GM13977 (cell line): ENCODE measurements at regions of chr13 and their contacts with region 1.

Region 1: DNA sequence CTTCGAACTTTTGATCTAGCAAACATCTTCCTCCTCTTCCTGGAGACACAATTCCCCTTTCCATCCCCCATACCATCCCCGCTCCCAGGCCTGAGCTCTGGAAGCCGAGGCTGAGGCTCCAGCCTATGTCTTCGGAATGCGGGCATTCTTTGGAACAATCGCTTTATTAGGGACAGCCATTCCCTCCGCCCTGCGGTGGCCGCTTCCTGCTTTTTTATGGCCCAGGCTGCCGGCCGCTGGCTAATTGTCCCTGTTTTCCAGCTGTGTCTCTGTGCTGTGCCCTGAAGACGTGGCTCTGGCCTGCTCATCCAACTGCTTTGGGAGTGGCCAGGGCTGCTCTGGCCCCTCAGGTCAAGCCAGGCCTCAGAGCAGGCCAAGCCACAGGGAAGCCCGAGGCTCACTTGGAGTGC is 2.1 kb upstream of the CDX2 start:
- DNase-seq: no peak
- CTCF ChIP-seq: no peak

Region 2: DNA sequence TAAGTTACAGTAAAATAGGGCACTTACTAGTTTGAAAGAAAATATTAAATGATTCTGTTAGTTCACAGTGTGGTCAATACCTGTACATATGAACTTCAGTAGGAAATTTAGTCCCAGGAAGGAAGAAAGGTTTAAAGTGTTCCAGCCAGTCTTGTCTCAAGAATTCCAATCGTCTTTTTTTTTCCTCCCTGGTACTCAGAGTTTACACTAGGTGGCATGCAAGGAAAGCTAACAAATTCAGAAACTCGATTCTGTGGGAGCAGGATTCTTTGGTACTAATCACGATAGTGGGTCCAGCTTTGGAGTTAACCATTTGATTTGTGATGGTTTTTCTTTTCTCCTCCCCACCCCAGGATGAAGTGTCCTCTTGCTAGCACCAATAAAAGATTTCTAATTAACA is 305.9 kb before region 1 on chr13:
- in situ Hi-C with region 1: no loop called
- DNase-seq: no peak
- CTCF ChIP-seq: no peak

Region 3: DNA sequence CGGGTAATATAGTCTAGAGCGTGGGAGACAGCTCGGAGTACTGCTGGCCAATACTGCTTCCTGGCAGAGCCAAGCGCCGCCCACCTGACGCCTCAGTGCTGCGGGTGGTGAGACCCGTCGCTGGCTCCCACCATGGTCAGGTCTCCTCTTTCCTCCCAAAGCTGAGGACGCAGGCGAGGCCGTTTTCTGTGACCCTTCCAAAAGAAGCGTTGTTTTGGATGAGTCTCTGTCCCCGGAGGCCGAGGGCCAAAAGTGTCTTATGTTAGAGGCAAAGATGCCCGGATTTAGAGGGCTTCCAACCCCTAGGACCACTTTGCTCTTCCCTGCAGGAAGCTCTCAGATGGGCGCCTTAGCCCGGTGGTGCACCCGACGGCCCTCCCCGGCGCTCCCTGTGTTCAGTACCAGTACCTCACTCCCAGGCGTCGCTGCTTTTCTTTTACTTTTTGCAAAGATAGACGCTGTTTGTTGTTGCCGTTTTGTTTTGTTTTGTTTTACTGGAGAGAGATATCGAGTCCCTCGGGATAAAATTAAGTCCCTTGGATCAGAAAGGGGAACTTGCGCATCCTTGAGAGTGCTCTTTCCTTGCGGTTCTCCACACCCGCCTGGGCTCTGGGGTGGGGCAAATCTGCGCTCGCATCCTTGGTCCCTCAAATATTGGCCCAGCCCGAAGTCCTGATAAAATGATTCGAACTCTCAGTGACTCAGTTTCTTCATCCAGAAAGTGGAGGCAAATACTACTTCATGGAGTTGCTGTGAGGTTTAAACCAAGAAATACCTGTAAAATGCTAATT is 44.4 kb before region 1 on chr13:
- in situ Hi-C with region 1: loop called (anchors 5 kb)
- DNase-seq: peak; percentile 32
- CTCF ChIP-seq: no peak

Region 4: DNA sequence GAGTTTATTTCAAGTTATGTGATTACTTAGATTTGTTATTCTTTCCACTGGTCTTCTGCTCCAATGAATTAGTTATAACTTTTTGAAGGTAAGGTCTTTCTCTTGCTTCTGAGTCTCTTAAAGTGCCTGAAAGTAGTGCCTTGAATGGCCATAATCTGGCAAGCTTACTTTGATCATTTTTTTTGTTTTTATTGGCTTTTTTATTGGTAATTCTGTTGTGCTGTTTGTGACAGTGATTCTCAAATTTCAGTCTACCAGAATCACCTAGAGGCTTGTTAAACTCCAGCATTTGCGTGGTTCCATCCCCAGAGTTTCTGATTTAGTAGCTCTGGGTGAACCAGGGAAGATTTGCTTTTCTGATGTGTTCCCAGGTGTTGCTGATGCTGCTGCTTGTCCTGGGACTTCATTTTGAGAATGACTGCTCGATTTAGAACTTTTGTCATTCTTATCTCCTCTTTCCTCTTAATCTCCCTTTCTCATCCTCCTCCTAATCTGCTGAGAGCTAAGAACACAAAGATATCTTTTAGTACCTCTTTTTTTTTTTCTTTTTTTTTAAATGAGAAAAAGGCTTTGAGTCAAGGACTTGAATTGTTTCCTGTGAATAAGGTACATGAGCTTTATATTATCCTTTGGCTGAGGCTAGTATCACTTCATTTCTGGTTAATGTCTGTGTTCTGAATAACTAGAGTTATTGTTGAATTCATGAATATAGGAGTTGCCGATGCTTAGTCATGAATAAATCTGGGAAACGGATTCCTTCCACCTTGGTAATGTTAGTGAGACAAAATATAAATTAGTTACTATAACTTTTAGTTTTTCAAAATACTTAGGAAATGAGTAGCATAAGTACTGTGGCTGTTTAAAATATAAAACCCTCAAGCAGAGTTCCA is 258.5 kb after region 1 on chr13:
- in situ Hi-C with region 1: no loop called
- DNase-seq: no peak
- CTCF ChIP-seq: no peak

Region 5: GRCh38 chr13:29550398-29550988 is 1579.3 kb after region 1 on chr13:
- in situ Hi-C with region 1: no loop called
- DNase-seq: no peak
- CTCF ChIP-seq: no peak